ENCODE measurements at regions of chr3 and their contacts with region 1.

Region 1: GRCh38 chr3:151838583-151839312 is 24.8 kb downstream of the AADAC start:
- DNase-seq: peak; percentile 88
- H3K4me3 Mint-ChIP-seq: no peak overlapping the region
- H3K27ac Mint-ChIP-seq: no peak overlapping the region
- H3K4me1 Mint-ChIP-seq: peaks cover 9% of the 10 kb centered on the region
- H3K27me3 Mint-ChIP-seq: no peaks in the 10 kb centered on the region
- CTCF ChIP-seq: peak; percentile 67

Region 2: GRCh38 chr3:151227807-151228665 is 610.7 kb before region 1 on chr3:
- CTCF ChIA-PET with region 1: interaction called, 25 read pairs
- POLR2A ChIA-PET with region 1: no interaction called
- intact Hi-C with region 1: loop called (anchors 1 kb)
- DNase-seq: peak; percentile 84
- H3K4me3 Mint-ChIP-seq: no peak overlapping the region
- H3K27ac Mint-ChIP-seq: no peak overlapping the region
- H3K4me1 Mint-ChIP-seq: peaks cover 18% of the 10 kb centered on the region
- H3K27me3 Mint-ChIP-seq: no peaks in the 10 kb centered on the region
- CTCF ChIP-seq: peak; percentile 81

Region 3: DNA sequence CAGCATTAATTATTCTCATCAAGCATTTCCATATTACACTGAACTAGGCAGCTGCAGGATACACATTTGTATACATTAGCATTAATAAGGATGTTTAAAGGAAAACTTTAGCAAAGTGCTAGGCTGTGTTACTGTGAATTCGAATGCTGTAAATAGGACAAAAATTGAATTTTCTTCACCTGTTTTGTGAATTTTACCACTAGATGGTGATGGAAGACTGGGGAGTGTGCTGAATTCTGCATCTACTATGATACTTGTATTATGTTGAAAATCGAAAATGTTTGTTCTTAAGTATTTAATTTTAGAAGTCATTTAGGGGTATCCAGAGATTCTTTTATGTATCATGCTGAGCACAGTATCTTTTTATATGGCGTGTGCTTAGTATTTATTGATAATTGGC is 548.1 kb before region 1 on chr3:
- CTCF ChIA-PET with region 1: interaction called, 6 read pairs
- POLR2A ChIA-PET with region 1: no interaction called
- intact Hi-C with region 1: loop called (anchors 1 kb)
- DNase-seq: peak; percentile 56
- H3K4me3 Mint-ChIP-seq: no peak overlapping the region
- H3K27ac Mint-ChIP-seq: no peak overlapping the region
- H3K4me1 Mint-ChIP-seq: no peaks in the 10 kb centered on the region
- H3K27me3 Mint-ChIP-seq: no peaks in the 10 kb centered on the region
- CTCF ChIP-seq: peak; percentile 75

Region 4: GRCh38 chr3:151379083-151379734 is 459.5 kb before region 1 on chr3:
- CTCF ChIA-PET with region 1: no interaction called
- POLR2A ChIA-PET with region 1: no interaction called
- intact Hi-C with region 1: no loop called
- DNase-seq: peak; percentile 35
- H3K4me3 Mint-ChIP-seq: no peak overlapping the region
- H3K27ac Mint-ChIP-seq: no peak overlapping the region
- H3K4me1 Mint-ChIP-seq: no peaks in the 10 kb centered on the region
- H3K27me3 Mint-ChIP-seq: no peaks in the 10 kb centered on the region
- CTCF ChIP-seq: no peak

Region 5: GRCh38 chr3:151434151-151434890 is 404.4 kb before region 1 on chr3:
- CTCF ChIA-PET with region 1: interaction called, 74 read pairs
- POLR2A ChIA-PET with region 1: interaction called, 12 read pairs
- intact Hi-C with region 1: loop called (anchors 1 kb)
- DNase-seq: peak; percentile 65
- H3K4me3 Mint-ChIP-seq: no peak overlapping the region
- H3K27ac Mint-ChIP-seq: no peak overlapping the region
- H3K4me1 Mint-ChIP-seq: peaks cover 6% of the 10 kb centered on the region
- H3K27me3 Mint-ChIP-seq: no peaks in the 10 kb centered on the region
- CTCF ChIP-seq: no peak

Region 6: GRCh38 chr3:151445273-151446001 is 393.3 kb before region 1 on chr3:
- CTCF ChIA-PET with region 1: interaction called, 74 read pairs
- POLR2A ChIA-PET with region 1: interaction called, 5 read pairs
- intact Hi-C with region 1: no loop called
- DNase-seq: peak; percentile 86
- H3K4me3 Mint-ChIP-seq: no peak overlapping the region
- H3K27ac Mint-ChIP-seq: no peak overlapping the region
- H3K4me1 Mint-ChIP-seq: peaks cover 12% of the 10 kb centered on the region
- H3K27me3 Mint-ChIP-seq: peaks cover 20% of the 10 kb centered on the region
- CTCF ChIP-seq: no peak

Region 7: GRCh38 chr3:151660885-151661284 is 177.9 kb before region 1 on chr3:
- CTCF ChIA-PET with region 1: no interaction called
- POLR2A ChIA-PET with region 1: no interaction called
- intact Hi-C with region 1: loop called (anchors 2 kb)
- DNase-seq: peak; percentile 13
- H3K4me3 Mint-ChIP-seq: no peak overlapping the region
- H3K27ac Mint-ChIP-seq: no peak overlapping the region
- H3K4me1 Mint-ChIP-seq: no peaks in the 10 kb centered on the region
- H3K27me3 Mint-ChIP-seq: no peaks in the 10 kb centered on the region
- CTCF ChIP-seq: peak; percentile 7

Region 8: GRCh38 chr3:152508705-152509104 is 670.0 kb after region 1 on chr3:
- CTCF ChIA-PET with region 1: no interaction called
- POLR2A ChIA-PET with region 1: no interaction called
- intact Hi-C with region 1: no loop called
- DNase-seq: peak; percentile 31
- H3K4me3 Mint-ChIP-seq: no peak overlapping the region
- H3K27ac Mint-ChIP-seq: no peak overlapping the region
- H3K4me1 Mint-ChIP-seq: no peaks in the 10 kb centered on the region
- H3K27me3 Mint-ChIP-seq: no peaks in the 10 kb centered on the region
- CTCF ChIP-seq: peak; percentile 35